Body of pancreas (tissue), 4 donors: ENCODE measurements at regions of chr2 and their contacts with region 1.

Region 1: GRCh38 chr2:44044281-44044720 is 48.5 kb upstream of the LRPPRC start:
- DNase-seq: peak; percentile 88 to 93 (median 90)
- ATAC-seq: peak; percentile 100
- H3K4me3 ChIP-seq: no peak overlapping the region
- H3K27ac ChIP-seq: no peak overlapping the region
- H3K4me1 ChIP-seq: peaks cover 18% of the 10 kb centered on the region
- H3K27me3 ChIP-seq: no peaks in the 10 kb centered on the region
- CTCF ChIP-seq: peak; percentile 77 to 95 (median 92)
- POLR2A ChIP-seq: no peak

Region 2: DNA sequence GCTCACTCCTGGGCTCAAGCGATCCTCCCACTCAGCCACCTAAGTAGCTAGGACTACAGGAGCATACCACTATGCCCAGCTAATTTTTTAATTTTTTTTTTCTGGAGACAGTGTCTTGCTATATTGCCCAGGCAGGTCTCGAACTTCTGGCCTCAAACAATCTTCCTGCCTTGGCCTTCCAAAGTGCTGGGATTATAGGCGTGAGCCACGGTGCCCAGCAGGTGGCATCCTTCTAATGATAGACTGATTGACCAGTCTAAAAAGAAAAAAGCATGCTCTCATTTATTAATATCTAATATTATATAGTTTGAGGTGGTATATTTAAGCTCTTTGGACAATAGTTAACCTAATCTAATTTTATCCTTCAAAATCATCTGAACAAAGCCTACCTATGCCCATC is 516.1 kb after region 1 on chr2:
- intact Hi-C with region 1: no loop called
- DNase-seq: peak in 1 of 4 donors; percentile 17
- ATAC-seq: no peak
- H3K4me3 ChIP-seq: no peak overlapping the region
- H3K27ac ChIP-seq: no peak overlapping the region
- H3K4me1 ChIP-seq: no peaks in the 10 kb centered on the region
- H3K27me3 ChIP-seq: no peaks in the 10 kb centered on the region
- CTCF ChIP-seq: peak in 2 of 7 experiments; percentile 20
- POLR2A ChIP-seq: no peak

Region 3: DNA sequence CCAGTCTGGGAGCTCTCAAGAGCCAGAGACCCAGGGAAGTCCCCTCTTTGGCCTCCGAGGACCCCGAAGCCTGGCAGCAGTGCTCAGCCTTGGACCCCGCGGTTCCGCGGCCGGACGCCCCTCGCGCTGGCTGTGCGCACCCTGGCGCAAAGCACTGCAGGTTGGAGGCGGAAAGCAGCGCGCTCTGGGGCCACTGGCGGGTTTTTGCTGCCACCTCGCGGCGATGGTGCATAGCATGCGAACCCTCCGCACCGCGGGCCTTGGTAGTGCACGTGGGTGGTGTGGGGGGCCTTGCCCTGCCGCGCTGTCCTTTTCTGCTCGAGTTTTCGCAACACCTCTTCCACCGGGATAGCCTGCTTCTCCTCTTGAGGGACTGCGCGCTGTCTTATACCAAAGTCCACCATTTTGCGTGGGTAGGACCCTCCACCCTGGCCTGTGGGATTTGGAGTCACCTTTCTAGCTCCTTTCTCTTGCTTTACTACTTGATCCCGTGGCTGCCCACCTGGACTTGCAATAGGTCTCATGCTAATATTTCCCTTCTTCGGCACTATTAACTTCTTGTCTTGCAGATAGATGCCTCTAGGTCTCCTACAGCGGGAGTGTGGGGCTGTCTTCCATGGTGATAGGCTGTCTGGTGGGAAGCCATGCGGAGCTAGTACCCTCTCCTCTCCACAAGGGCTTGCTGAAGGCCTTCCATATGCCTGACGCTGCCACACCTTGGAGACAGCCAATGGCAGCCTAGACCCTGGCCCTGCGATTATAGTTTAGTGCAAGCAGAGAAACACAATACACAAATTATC is 911.5 kb after region 1 on chr2:
- intact Hi-C with region 1: loop called (anchors 10 kb)
- DNase-seq: peak; percentile 67 to 77 (median 76)
- ATAC-seq: peak; percentile 79
- H3K4me3 ChIP-seq: no peak overlapping the region
- H3K27ac ChIP-seq: no peak overlapping the region
- H3K4me1 ChIP-seq: peaks cover 47% of the 10 kb centered on the region
- H3K27me3 ChIP-seq: peaks cover 0 to 19% of the 10 kb centered on the region in 2 donors
- CTCF ChIP-seq: peak; percentile 81 to 90 (median 87)
- POLR2A ChIP-seq: no peak